ENCODE measurements at regions of chr17 and their contacts with region 1.

Region 1: GRCh38 chr17:55513885-55514591 is 2.8 kb upstream of the SMIM36 start:
- DNase-seq: peak; percentile 33 to 53
- ATAC-seq: peak; percentile 85 to 91
- H3K4me3 ChIP-seq: no peak overlapping the region
- H3K27ac ChIP-seq: no peak overlapping the region
- H3K4me1 ChIP-seq: no peaks in the 10 kb centered on the region
- H3K27me3 ChIP-seq: no peaks in the 10 kb centered on the region
- CTCF ChIP-seq: peak; percentile 76 to 93 (median 85)
- POLR2A ChIP-seq: no peak

Region 2: GRCh38 chr17:54992797-54993639 is 521.0 kb before region 1 on chr17:
- in situ Hi-C with region 1: loop called in 3 of 4 experiments (anchors 10 to 25 kb)
- intact Hi-C with region 1: no loop called
- DNase-seq: no peak
- ATAC-seq: peak; percentile 39 to 69
- H3K4me3 ChIP-seq: no peak overlapping the region
- H3K27ac ChIP-seq: no peak overlapping the region
- H3K4me1 ChIP-seq: no peaks in the 10 kb centered on the region
- H3K27me3 ChIP-seq: no peaks in the 10 kb centered on the region
- CTCF ChIP-seq: peak; percentile 37 to 69 (median 56)
- POLR2A ChIP-seq: no peak

Region 3: GRCh38 chr17:55037828-55038227 is 476.2 kb before region 1 on chr17:
- in situ Hi-C with region 1: no loop called
- intact Hi-C with region 1: no loop called
- DNase-seq: no peak
- ATAC-seq: no peak
- H3K4me3 ChIP-seq: no peak overlapping the region
- H3K27ac ChIP-seq: no peak overlapping the region
- H3K4me1 ChIP-seq: no peaks in the 10 kb centered on the region
- H3K27me3 ChIP-seq: no peaks in the 10 kb centered on the region
- CTCF ChIP-seq: no peak
- POLR2A ChIP-seq: no peak

Region 4: DNA sequence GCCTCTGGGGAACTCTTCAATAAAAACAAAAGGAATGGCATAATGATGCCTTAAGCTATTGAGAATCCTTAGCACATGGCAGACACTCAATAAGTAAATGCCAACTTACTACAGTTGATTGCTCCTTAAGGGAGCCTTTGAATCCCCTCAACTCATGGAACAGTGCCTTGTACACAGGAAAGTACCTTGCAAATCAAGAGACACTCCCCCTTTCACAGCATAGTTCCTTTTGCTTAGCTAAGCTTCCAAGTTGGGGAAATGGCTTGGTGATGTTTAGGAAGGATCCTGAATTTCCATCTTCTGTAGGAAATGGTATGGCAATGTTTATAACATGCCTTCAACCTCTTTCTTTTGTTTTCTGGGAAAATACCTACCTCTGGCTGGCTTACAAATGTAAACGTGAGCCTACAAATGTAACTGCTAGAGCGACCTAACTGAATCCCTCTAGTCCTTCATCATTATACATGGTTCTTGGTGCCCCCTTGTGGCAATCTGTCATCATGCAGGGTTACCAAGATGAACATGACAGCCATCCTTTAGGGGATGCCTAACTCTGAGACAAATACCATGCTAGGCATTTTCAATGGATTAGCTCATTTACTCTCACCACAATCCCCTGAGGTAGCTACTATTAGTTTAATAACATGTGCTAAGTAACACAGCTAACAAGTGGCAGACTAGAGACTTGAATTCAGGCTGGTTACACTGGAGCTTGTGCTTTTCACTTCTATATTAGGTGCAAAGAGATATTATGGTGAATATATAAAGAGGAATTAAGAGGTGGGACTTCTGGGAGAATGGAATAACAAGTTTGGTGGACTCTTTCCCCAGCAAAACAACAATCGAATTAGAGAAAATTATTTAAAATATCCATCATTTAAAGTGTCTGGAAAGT is 157.4 kb before region 1 on chr17:
- in situ Hi-C with region 1: no loop called
- intact Hi-C with region 1: loop called (anchors 2 kb)
- DNase-seq: peak; percentile 12 to 27
- ATAC-seq: peak; percentile 46 to 69
- H3K4me3 ChIP-seq: no peak overlapping the region
- H3K27ac ChIP-seq: no peak overlapping the region
- H3K4me1 ChIP-seq: no peaks in the 10 kb centered on the region
- H3K27me3 ChIP-seq: no peaks in the 10 kb centered on the region
- CTCF ChIP-seq: peak; percentile 47 to 75 (median 57)
- POLR2A ChIP-seq: no peak

Region 5: GRCh38 chr17:55717898-55718735 is 204.1 kb after region 1 on chr17:
- in situ Hi-C with region 1: no loop called
- intact Hi-C with region 1: no loop called
- DNase-seq: peak; percentile 51 to 78
- ATAC-seq: peak; percentile 58 to 64
- H3K4me3 ChIP-seq: no peak overlapping the region
- H3K27ac ChIP-seq: no peak overlapping the region
- H3K4me1 ChIP-seq: peaks cover 5 to 7% of the 10 kb centered on the region in 2 donors
- H3K27me3 ChIP-seq: no peaks in the 10 kb centered on the region
- CTCF ChIP-seq: peak; percentile 52 to 91 (median 81)
- POLR2A ChIP-seq: no peak

Measured in gastrocnemius medialis (tissue), 4 donors.